Cardiac septum (tissue), 1 donor: ENCODE measurements at regions of chr11 and their contacts with region 1.

Region 1: DNA sequence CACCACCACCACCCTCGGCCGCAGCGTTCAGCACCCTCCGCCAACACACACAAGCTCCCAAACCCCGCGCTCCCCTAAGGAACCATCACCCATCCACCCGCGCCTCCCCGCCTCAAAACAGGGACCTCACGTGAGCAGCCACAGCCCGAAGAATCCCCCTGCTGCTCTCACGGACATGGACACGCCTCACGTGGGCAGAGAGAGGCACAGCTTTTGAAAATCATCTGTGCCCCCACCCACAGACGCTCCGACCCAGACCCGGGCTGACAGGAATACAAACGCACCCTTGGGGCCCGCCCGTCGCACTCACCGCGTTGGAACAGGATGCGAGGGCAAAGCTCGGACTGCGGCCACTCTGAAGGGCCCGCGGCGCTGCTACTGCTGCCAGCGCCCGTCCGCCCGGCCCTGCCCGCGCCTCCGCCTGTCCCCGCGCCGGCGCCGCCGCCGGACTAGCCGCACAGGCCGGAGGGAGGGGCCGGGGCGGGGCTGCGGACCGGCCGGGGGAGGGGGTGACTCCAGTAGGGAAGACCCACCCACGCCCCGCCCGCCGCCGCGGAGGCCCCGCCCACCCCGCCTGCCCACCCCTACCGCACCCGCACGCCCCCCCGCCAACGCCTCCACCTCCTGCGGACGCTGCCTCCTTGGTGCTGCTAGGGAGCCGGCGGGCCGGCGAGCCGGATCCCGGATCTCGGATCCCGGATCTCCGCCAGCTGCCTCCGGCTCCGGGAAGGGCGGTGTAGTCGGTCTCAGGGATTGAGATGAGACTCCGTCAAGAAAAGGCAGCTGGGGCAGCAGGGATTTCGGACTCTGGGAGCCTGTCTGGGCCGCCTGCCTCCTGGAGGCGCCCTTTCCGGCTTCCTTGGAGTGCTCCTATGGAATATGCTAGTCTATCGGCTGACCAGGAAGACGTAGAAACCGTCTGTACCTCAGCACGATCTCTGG is at the start of gene TRIM3:
- DNase-seq: peak; percentile 96
- total RNA-seq, gene TRIM3: 11.7 TPM

Region 2: GRCh38 chr11:6234387-6235107 is 239.2 kb before region 1 on chr11 and contains the start of gene FHIP1B:
- intact Hi-C with region 1: loop called (anchors 10 kb)
- DNase-seq: peak; percentile 100
- total RNA-seq, gene FHIP1B: 19.7 TPM